ENCODE measurements at regions of chr1 and their contacts with region 1.

Region 1: DNA sequence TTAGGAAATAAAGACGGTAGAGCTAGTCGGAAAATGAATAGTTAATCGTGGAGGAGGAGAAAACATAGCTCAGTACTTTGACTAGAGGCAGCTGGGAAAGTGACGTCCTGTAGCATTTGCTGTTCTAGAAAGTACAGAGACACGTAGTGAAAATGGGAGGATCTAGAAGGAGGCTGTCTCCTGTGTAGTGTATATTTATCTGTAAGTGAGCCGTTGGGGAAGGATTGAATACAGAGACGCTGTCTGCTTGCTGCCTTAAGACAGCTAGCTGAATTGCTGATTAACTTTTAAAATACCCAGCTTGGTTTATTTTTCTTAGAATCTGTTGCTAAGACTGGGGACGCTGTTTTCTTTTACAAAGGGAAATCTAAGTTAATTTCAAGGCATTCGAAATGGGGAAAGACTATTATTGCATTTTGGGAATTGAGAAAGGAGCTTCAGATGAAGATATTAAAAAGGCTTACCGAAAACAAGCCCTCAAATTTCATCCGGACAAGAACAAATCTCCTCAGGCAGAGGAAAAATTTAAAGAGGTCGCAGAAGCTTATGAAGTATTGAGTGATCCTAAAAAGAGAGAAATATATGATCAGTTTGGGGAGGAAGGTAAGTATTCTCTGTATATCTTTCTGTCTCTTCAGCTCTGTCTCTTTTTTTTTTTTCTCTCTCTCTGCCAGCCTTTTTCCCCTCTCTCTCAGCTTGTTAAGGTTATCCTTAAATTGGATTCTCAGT is at the start of gene DNAJB4:
- DNase-seq: peak; percentile 97
- H3K4me3 Mint-ChIP-seq: peak within 1 kb of the TSS; percentile 88
- H3K27ac Mint-ChIP-seq: peak within 1 kb of the TSS; percentile 97
- H3K4me1 Mint-ChIP-seq: peaks cover 19% of the 10 kb centered on the region
- H3K27me3 Mint-ChIP-seq: no peaks in the 10 kb centered on the region
- CTCF ChIP-seq: no peak
- total RNA-seq, gene DNAJB4: 28.5 and 33.5 TPM in 2 replicates

Region 2: DNA sequence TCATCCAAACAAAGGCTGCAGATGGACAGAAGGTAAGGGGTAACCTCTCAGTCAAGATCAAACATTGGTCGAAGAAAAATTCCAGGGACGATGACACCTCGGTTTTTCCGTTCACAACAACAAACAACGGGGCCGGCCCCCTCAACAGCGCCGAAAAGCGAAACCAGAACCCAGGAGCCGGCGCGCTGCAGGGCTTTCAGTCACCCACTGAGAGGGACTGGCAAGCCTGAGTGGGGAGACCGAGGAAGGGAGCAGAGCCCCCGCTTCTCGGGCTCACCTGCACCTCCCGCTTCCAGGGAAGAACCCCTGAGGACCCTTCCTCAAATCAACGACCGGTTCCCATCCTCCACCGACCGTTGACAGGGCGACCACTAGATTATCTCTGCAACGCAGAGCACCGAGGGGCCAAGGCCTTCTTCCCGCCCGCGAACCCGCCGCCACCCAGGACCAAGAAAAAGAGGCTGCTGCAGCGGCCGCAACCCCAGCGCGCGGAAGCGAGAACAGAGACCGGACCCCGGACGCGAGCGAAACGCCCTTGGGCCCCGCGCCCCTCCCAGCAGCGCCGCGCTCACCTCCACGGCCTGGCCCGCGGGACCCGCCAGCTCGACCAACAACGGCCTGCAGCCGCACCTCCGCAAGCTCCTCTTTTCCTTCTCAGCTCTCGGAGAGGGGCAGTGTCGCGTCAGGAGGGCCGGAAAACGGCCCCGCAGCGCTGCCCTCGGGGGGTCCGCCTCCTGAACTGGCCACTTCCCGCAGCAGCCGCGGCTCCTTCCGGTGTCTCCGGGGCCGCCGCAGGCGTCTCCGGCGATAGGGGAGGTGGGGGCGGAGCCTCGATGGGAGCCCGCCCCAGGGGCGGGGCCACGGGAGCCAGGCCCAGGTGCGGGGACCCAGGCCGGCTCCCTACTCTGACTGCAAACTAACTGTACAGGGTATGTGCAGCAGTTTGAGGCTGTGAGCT is 245.5 kb before region 1 on chr1 and contains the start of gene USP33:
- CTCF ChIA-PET with region 1: no interaction called
- POLR2A ChIA-PET with region 1: interaction called, 18 read pairs
- intact Hi-C with region 1: no loop called
- DNase-seq: peak; percentile 84
- H3K4me3 Mint-ChIP-seq: peak within 1 kb of the TSS; percentile 91
- H3K27ac Mint-ChIP-seq: peak within 1 kb of the TSS; percentile 91
- H3K4me1 Mint-ChIP-seq: peaks cover 31% of the 10 kb centered on the region
- H3K27me3 Mint-ChIP-seq: no peaks in the 10 kb centered on the region
- CTCF ChIP-seq: no peak
- total RNA-seq, gene USP33: 39.7 and 45.1 TPM in 2 replicates

Region 3: GRCh38 chr1:77857552-77857951 is 147.3 kb before region 1 on chr1:
- CTCF ChIA-PET with region 1: no interaction called
- POLR2A ChIA-PET with region 1: no interaction called
- intact Hi-C with region 1: no loop called
- DNase-seq: no peak
- H3K4me3 Mint-ChIP-seq: no peak overlapping the region
- H3K27ac Mint-ChIP-seq: no peak overlapping the region
- H3K4me1 Mint-ChIP-seq: peaks cover 15% of the 10 kb centered on the region
- H3K27me3 Mint-ChIP-seq: no peaks in the 10 kb centered on the region
- CTCF ChIP-seq: no peak

Region 4: GRCh38 chr1:77978969-77979876 is 25.7 kb before region 1 on chr1 and contains the start of gene FUBP1:
- CTCF ChIA-PET with region 1: interaction called, 59 read pairs
- POLR2A ChIA-PET with region 1: interaction called, 598 read pairs
- intact Hi-C with region 1: loop called (anchors 1 kb)
- DNase-seq: peak; percentile 99
- H3K4me3 Mint-ChIP-seq: no peak within 1 kb of the TSS
- H3K27ac Mint-ChIP-seq: no peak within 1 kb of the TSS
- H3K4me1 Mint-ChIP-seq: peaks cover 23% of the 10 kb centered on the region
- H3K27me3 Mint-ChIP-seq: no peaks in the 10 kb centered on the region
- CTCF ChIP-seq: peak; percentile 68
- total RNA-seq, gene FUBP1: 156 and 169 TPM in 2 replicates

Region 5: DNA sequence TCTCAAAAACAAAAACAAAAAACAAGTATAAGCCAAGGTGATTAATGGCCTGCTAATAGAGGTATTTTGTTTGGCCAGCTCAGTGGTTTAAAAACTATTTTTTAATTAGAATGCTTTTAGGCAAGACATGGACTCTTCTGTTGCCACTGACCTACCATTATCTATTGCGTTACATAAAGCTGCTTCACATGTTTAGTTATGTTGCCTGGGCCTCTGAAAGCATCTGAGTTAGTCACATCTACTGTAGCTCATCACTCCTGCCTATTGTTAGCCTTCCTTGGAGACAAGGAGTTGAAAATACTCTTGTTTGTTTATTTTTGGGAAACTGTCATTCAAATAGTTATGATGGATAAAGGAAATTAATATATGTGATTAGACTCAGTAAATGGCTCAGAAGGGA is 14.1 kb after region 1 on chr1:
- CTCF ChIA-PET with region 1: interaction called, 4 read pairs
- POLR2A ChIA-PET with region 1: interaction called, 17 read pairs
- intact Hi-C with region 1: no loop called
- DNase-seq: no peak
- H3K4me3 Mint-ChIP-seq: no peak overlapping the region
- H3K27ac Mint-ChIP-seq: no peak overlapping the region
- H3K4me1 Mint-ChIP-seq: peaks cover 9% of the 10 kb centered on the region
- H3K27me3 Mint-ChIP-seq: no peaks in the 10 kb centered on the region
- CTCF ChIP-seq: no peak

Region 6: GRCh38 chr1:78095593-78095992 is 90.7 kb after region 1 on chr1:
- CTCF ChIA-PET with region 1: interaction called, 4 read pairs
- POLR2A ChIA-PET with region 1: interaction called, 27 read pairs
- intact Hi-C with region 1: no loop called
- DNase-seq: peak; percentile 20
- H3K4me3 Mint-ChIP-seq: no peak overlapping the region
- H3K27ac Mint-ChIP-seq: peak overlapping the region; percentile 41
- H3K4me1 Mint-ChIP-seq: peaks cover 25% of the 10 kb centered on the region
- H3K27me3 Mint-ChIP-seq: no peaks in the 10 kb centered on the region
- CTCF ChIP-seq: no peak